ENCODE measurements at regions of chr2 and their contacts with region 1.

Region 1: DNA sequence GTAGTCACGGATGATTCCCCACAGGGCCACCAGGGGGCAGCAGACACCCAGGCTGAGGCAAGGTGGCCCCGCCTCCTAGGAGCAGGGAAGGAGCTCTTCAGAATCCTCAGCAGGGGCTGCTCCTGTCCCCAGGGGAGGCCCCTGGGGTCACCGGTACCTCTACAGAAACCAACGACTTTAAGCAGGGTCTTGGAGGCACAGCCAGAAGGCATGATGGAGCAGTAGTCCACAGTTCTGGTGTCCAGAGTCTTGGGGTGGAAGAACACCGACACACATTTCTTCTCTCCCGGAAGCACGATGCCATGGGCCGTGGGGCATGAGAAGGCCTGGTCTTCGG is 11.5 kb downstream of the CFAP65 start:
- DNase-seq: peak; percentile 43
- H3K4me3 ChIP-seq: no peak overlapping the region
- H3K27ac ChIP-seq: no peak overlapping the region
- H3K4me1 ChIP-seq: no peaks in the 10 kb centered on the region
- H3K27me3 ChIP-seq: peaks cover 3% of the 10 kb centered on the region
- CTCF ChIP-seq: peak; percentile 90 to 97

Region 2: GRCh38 chr2:218944759-218945404 is 84.9 kb before region 1 on chr2:
- CTCF ChIA-PET with region 1: interaction called, 23 read pairs
- dilution Hi-C with region 1: no loop called
- in situ Hi-C with region 1: no loop called
- intact Hi-C with region 1: no loop called
- DNase-seq: no peak
- H3K4me3 ChIP-seq: no peak overlapping the region
- H3K27ac ChIP-seq: no peak overlapping the region
- H3K4me1 ChIP-seq: no peaks in the 10 kb centered on the region
- H3K27me3 ChIP-seq: no peaks in the 10 kb centered on the region
- CTCF ChIP-seq: no peak

Region 3: GRCh38 chr2:218995972-218996711 is 33.7 kb before region 1 on chr2:
- CTCF ChIA-PET with region 1: interaction called, 6 read pairs
- dilution Hi-C with region 1: no loop called
- in situ Hi-C with region 1: no loop called
- intact Hi-C with region 1: loop called (anchors 1 kb)
- DNase-seq: peak; percentile 70
- H3K4me3 ChIP-seq: peak overlapping the region; percentile 26 to 54 (median 49)
- H3K27ac ChIP-seq: no peak overlapping the region
- H3K4me1 ChIP-seq: peaks cover 17% of the 10 kb centered on the region
- H3K27me3 ChIP-seq: peaks cover 6% of the 10 kb centered on the region
- CTCF ChIP-seq: peak; percentile 64 to 90

Region 4: DNA sequence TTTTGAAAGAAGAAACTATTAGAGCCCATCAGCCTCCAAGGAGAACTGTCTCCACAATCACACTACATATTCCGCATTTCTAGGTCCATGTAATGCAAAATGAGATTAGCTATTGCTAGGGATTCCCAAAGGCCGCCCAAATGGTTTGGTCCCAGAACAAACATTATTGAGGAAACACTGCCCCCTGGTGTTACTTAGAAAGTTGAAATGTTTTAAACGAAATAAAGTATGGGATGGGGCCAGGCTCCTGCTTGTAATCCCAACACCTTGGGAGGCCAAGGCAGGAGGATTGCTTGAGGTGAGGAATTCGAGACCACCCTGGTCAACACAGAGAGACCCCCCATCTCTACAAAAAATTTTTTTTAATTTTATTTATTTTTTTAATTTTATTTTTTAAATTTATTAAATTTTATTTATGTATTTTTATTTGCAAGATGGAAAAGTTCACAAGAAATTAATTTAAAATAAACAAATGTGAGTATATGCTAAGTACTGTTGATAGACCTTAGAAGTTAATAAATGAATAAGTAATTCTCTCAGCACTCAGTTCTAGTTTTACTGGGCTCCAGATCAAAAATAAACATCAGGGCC is 125.4 kb after region 1 on chr2:
- CTCF ChIA-PET with region 1: interaction called, 11 read pairs
- dilution Hi-C with region 1: no loop called
- in situ Hi-C with region 1: loop called in 1 of 2 experiments (anchors 10 kb)
- intact Hi-C with region 1: loop called (anchors 1 kb)
- DNase-seq: peak; percentile 54
- H3K4me3 ChIP-seq: no peak overlapping the region
- H3K27ac ChIP-seq: no peak overlapping the region
- H3K4me1 ChIP-seq: peaks cover 9% of the 10 kb centered on the region
- H3K27me3 ChIP-seq: no peaks in the 10 kb centered on the region
- CTCF ChIP-seq: peak; percentile 23 to 61

Region 5: DNA sequence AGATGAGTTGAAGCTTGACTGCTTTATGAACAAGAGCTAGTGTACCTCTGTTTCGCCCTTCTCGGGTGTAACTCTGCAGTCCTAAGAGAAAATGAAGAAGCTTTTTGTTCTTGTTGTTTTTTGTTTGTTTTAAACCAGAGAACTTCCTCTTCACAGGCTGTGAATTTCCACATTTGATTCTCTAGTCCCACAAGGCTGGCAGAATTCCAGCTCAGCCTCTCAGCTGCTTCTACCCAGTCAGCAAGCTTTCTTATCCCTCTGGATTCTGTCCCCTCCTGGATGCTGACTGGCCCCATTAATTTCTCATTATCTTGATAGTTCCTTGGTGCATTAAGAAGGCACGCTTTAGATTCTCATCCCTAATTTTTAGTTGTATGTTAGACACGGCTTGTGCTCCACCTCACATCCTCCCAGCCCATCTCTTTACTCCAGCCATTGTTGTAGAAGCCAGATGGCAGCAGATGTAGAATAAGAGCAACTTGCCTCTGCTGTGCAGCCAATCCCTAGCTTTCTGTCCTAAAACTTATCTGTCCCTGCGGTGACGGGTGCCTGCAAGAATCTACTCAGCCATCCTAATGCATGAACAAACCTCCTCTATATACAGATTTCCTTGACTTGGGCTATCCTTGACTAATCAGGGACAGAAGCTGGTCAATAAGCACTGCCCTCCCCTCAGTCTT is 315.1 kb after region 1 on chr2:
- CTCF ChIA-PET with region 1: no interaction called
- dilution Hi-C with region 1: no loop called
- in situ Hi-C with region 1: loop called in 1 of 2 experiments (anchors 25 kb)
- intact Hi-C with region 1: no loop called
- DNase-seq: no peak
- H3K4me3 ChIP-seq: no peak overlapping the region
- H3K27ac ChIP-seq: no peak overlapping the region
- H3K4me1 ChIP-seq: no peaks in the 10 kb centered on the region
- H3K27me3 ChIP-seq: no peaks in the 10 kb centered on the region
- CTCF ChIP-seq: no peak

Measured in mammary epithelial cell (primary cell).